CD4-positive, alpha-beta T cell (primary cell): ENCODE measurements at regions of chr16 and their contacts with region 1.

Region 1: DNA sequence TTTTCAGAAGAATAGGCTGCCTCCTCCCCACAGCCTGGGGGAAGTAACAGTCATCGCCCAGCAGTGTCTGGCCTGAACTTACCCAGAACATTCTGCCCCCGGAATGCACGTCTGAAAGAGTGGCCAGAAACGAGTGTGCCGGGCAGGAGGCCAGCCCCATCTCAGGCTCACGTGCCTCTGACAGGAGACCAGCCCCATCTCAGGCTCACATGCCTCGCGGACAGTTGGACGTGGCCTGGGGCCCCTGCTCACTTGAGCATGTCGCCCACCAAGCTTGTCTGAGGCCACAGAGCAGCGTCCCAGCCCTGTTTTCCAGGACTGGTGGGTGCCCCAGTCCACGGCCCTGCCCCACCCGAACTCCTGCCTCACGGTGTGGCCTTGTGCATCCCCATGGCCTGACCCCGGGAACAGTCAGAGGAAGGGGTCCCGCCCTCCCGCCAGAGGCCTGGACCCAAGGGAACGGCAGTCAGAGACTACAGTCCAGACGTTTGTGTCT is 16.3 kb upstream of the CDH15 start:
- DNase-seq: no peak
- ATAC-seq: no peak
- H3K4me3 ChIP-seq: no peak overlapping the region
- H3K4me3 Mint-ChIP-seq: no peak overlapping the region
- H3K27ac ChIP-seq: no peak overlapping the region
- H3K27ac Mint-ChIP-seq: no peak overlapping the region
- H3K4me1 ChIP-seq: peaks cover 10% of the 10 kb centered on the region
- H3K4me1 Mint-ChIP-seq: peaks cover 4% of the 10 kb centered on the region
- H3K27me3 ChIP-seq: no peaks in the 10 kb centered on the region
- H3K27me3 Mint-ChIP-seq: no peaks in the 10 kb centered on the region
- CTCF ChIP-seq: no peak

Region 2: GRCh38 chr16:89074803-89075688 is 80.2 kb before region 1 on chr16:
- CTCF ChIA-PET with region 1: no interaction called
- POLR2A ChIA-PET with region 1: no interaction called
- intact Hi-C with region 1: loop called in 1 of 2 experiments (anchors 5 kb)
- DNase-seq: no peak
- ATAC-seq: no peak
- H3K4me3 ChIP-seq: no peak overlapping the region
- H3K4me3 Mint-ChIP-seq: no peak overlapping the region
- H3K27ac ChIP-seq: peak overlapping the region in 1 of 2 donors; percentile 1
- H3K27ac Mint-ChIP-seq: no peak overlapping the region
- H3K4me1 ChIP-seq: no peaks in the 10 kb centered on the region
- H3K4me1 Mint-ChIP-seq: no peaks in the 10 kb centered on the region
- H3K27me3 ChIP-seq: no peaks in the 10 kb centered on the region
- H3K27me3 Mint-ChIP-seq: no peaks in the 10 kb centered on the region
- CTCF ChIP-seq: no peak

Region 3: GRCh38 chr16:89293276-89294143 is 138.3 kb after region 1 on chr16:
- CTCF ChIA-PET with region 1: no interaction called
- POLR2A ChIA-PET with region 1: no interaction called
- intact Hi-C with region 1: no loop called
- DNase-seq: no peak
- ATAC-seq: no peak
- H3K4me3 ChIP-seq: no peak overlapping the region
- H3K4me3 Mint-ChIP-seq: no peak overlapping the region
- H3K27ac ChIP-seq: no peak overlapping the region
- H3K27ac Mint-ChIP-seq: no peak overlapping the region
- H3K4me1 ChIP-seq: peaks cover 57% of the 10 kb centered on the region
- H3K4me1 Mint-ChIP-seq: peaks cover 36% of the 10 kb centered on the region
- H3K27me3 ChIP-seq: no peaks in the 10 kb centered on the region
- H3K27me3 Mint-ChIP-seq: no peaks in the 10 kb centered on the region
- CTCF ChIP-seq: no peak